OCI-LY7 (cell line): ENCODE measurements at regions of chr10 and their contacts with region 1.

Region 1: DNA sequence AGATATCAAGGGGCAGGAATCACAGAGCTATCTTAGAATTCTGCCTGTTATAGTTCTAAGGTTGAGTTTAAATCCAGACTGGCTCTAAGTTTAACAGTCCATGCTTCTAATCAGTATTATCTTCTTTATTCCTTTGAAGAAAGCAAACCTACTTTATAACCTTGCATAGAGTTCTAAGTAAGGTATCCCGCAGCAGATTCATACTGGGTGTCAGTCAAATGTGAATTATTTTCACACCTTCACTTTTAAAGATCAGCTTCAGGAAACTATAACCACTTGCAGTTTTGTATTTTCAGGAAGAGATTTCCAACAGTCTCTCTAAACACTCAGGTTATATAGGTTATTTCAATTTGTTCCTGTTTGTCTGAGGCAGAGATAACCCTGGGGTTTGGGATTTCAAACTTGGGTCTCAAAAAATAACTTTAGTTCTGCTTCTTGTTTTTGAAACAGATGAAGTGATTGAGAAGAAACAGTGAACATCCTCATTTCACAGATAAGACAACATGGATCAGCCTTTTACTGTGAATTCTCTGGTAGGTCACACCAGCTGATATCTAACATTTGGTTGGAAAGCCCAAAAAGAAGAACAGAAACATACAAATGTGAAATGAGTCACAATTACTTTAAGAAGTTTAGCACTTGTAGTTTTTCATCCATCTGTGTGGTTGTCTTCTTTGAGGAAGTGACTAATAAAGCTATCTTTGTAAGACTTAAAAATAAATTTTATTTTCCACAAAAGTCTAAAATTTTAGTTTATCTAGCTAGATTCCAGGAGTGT is 21.4 kb downstream of the STAMBPL1 start:
- DNase-seq: peak; percentile 80
- H3K4me3 ChIP-seq: peak overlapping the region; percentile 45
- H3K27ac ChIP-seq: peak overlapping the region; percentile 92
- H3K4me1 ChIP-seq: peaks cover 57% of the 10 kb centered on the region
- CTCF ChIP-seq: no peak

Region 2: GRCh38 chr10:88886557-88886956 is 14.8 kb before region 1 on chr10:
- CTCF ChIA-PET with region 1: interaction called, 5 read pairs
- POLR2A ChIA-PET with region 1: interaction called, 201 read pairs
- intact Hi-C with region 1: no loop called
- DNase-seq: peak; percentile 78
- H3K4me3 ChIP-seq: peak overlapping the region; percentile 80
- H3K27ac ChIP-seq: peak overlapping the region; percentile 93
- H3K4me1 ChIP-seq: peaks cover 94% of the 10 kb centered on the region
- CTCF ChIP-seq: no peak